Endothelial cell of umbilical vein (primary cell): ENCODE measurements at regions of chr17 and their contacts with region 1.

Region 1: GRCh38 chr17:49567871-49568694 is 7.6 kb upstream of the NXPH3 start:
- DNase-seq: peak; percentile 79
- H3K4me3 ChIP-seq: peak overlapping the region; percentile 10 to 34 (median 25)
- H3K27ac ChIP-seq: no peak overlapping the region
- H3K4me1 ChIP-seq: peaks cover 5% of the 10 kb centered on the region
- H3K27me3 ChIP-seq: peaks cover 6 to 16% of the 10 kb centered on the region in 2 experiments
- CTCF ChIP-seq: peak; percentile 90 to 93
- POLR2A ChIP-seq: no peak

Region 2: GRCh38 chr17:49527927-49528651 is 40.0 kb before region 1 on chr17:
- CTCF ChIA-PET with region 1: no interaction called
- POLR2A ChIA-PET with region 1: no interaction called
- dilution Hi-C with region 1: no loop called
- intact Hi-C with region 1: no loop called
- DNase-seq: no peak
- H3K4me3 ChIP-seq: no peak overlapping the region
- H3K27ac ChIP-seq: no peak overlapping the region
- H3K4me1 ChIP-seq: no peaks in the 10 kb centered on the region
- H3K27me3 ChIP-seq: peaks cover 0 to 12% of the 10 kb centered on the region in 2 experiments
- CTCF ChIP-seq: no peak
- POLR2A ChIP-seq: no peak

Region 3: GRCh38 chr17:49545806-49546545 is 22.1 kb before region 1 on chr17:
- CTCF ChIA-PET with region 1: no interaction called
- POLR2A ChIA-PET with region 1: no interaction called
- dilution Hi-C with region 1: no loop called
- intact Hi-C with region 1: no loop called
- DNase-seq: no peak
- H3K4me3 ChIP-seq: no peak overlapping the region
- H3K27ac ChIP-seq: no peak overlapping the region
- H3K4me1 ChIP-seq: no peaks in the 10 kb centered on the region
- H3K27me3 ChIP-seq: peaks cover 3 to 7% of the 10 kb centered on the region in 2 experiments
- CTCF ChIP-seq: no peak
- POLR2A ChIP-seq: no peak

Region 4: GRCh38 chr17:49597928-49598655 is 30.0 kb after region 1 on chr17:
- CTCF ChIA-PET with region 1: interaction called, 10 read pairs
- POLR2A ChIA-PET with region 1: no interaction called
- dilution Hi-C with region 1: no loop called
- intact Hi-C with region 1: no loop called
- DNase-seq: peak; percentile 32
- H3K4me3 ChIP-seq: no peak overlapping the region
- H3K27ac ChIP-seq: no peak overlapping the region
- H3K4me1 ChIP-seq: peaks cover 7% of the 10 kb centered on the region
- H3K27me3 ChIP-seq: no peaks in the 10 kb centered on the region
- CTCF ChIP-seq: no peak
- POLR2A ChIP-seq: no peak

Region 5: GRCh38 chr17:49677933-49678847 is 110.1 kb after region 1 on chr17 and contains the start of gene SPOP:
- CTCF ChIA-PET with region 1: interaction called, 13 read pairs
- POLR2A ChIA-PET with region 1: no interaction called
- dilution Hi-C with region 1: no loop called
- intact Hi-C with region 1: no loop called
- DNase-seq: peak; percentile 99
- H3K4me3 ChIP-seq: peak within 1 kb of the TSS; percentile 38 to 86 (median 75)
- H3K27ac ChIP-seq: peak within 1 kb of the TSS; percentile 45
- H3K4me1 ChIP-seq: peaks cover 10% of the 10 kb centered on the region
- H3K27me3 ChIP-seq: no peaks in the 10 kb centered on the region
- CTCF ChIP-seq: no peak
- POLR2A ChIP-seq: peak; percentile 73
- total RNA-seq, gene SPOP: 61.0 and 61.9 TPM in 2 replicates

Region 6: GRCh38 chr17:49763735-49764558 is 195.9 kb after region 1 on chr17 and contains the start of gene FAM117A:
- CTCF ChIA-PET with region 1: interaction called, 5 read pairs
- POLR2A ChIA-PET with region 1: interaction called, 10 read pairs
- dilution Hi-C with region 1: no loop called
- intact Hi-C with region 1: loop called (anchors 1 kb)
- DNase-seq: peak; percentile 99
- H3K4me3 ChIP-seq: peak within 1 kb of the TSS; percentile 63 to 86 (median 67)
- H3K27ac ChIP-seq: no peak within 1 kb of the TSS
- H3K4me1 ChIP-seq: peaks cover 14% of the 10 kb centered on the region
- H3K27me3 ChIP-seq: peaks cover 15 to 42% of the 10 kb centered on the region in 2 experiments
- CTCF ChIP-seq: no peak
- POLR2A ChIP-seq: peak; percentile 54
- total RNA-seq, gene FAM117A: 10.4 and 12.2 TPM in 2 replicates

Region 7: GRCh38 chr17:49851387-49852291 is 283.6 kb after region 1 on chr17:
- CTCF ChIA-PET with region 1: interaction called, 18 read pairs
- POLR2A ChIA-PET with region 1: no interaction called
- dilution Hi-C with region 1: no loop called
- intact Hi-C with region 1: loop called (anchors 1 kb)
- DNase-seq: peak; percentile 73
- H3K4me3 ChIP-seq: peak overlapping the region; percentile 18 to 41 (median 36)
- H3K27ac ChIP-seq: peak overlapping the region; percentile 1
- H3K4me1 ChIP-seq: peaks cover 6% of the 10 kb centered on the region
- H3K27me3 ChIP-seq: no peaks in the 10 kb centered on the region
- CTCF ChIP-seq: peak; percentile 71 to 92
- POLR2A ChIP-seq: no peak